Upper lobe of right lung (tissue), 1 donor: ENCODE measurements at regions of chr1 and their contacts with region 1.

Region 1: GRCh38 chr1:10430216-10431069 is at the start of gene CENPS:
- DNase-seq: peak; percentile 96
- ATAC-seq: peak; percentile 95
- H3K4me3 ChIP-seq: peak within 1 kb of the TSS; percentile 92
- H3K27ac ChIP-seq: peak within 1 kb of the TSS; percentile 77
- H3K4me1 ChIP-seq: peaks cover 15% of the 10 kb centered on the region
- H3K27me3 ChIP-seq: no peaks in the 10 kb centered on the region
- CTCF ChIP-seq: peak; percentile 95
- total RNA-seq, gene CENPS: 10.2 TPM

Region 2: DNA sequence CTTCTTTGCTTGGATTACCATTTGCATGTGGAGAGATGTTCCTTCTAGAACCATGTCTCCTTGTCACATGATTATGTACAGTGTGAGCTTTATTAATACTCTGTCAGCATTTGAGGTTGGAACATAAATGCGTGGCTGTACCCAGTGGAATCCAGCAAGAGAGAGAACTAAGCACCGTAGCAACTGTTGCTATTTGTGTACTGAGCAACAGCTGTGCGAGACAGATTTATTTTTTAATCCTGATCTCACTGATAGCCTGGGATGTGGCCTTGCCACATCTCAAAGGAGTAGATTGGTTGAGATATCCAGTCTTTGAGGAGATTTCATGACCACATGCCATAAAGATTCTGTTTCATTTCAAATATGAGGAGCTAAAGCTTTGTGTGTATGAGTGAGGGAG is 176.7 kb before region 1 on chr1:
- intact Hi-C with region 1: no loop called
- DNase-seq: no peak
- ATAC-seq: peak; percentile 93
- H3K4me3 ChIP-seq: no peak overlapping the region
- H3K27ac ChIP-seq: peak overlapping the region; percentile 75
- H3K4me1 ChIP-seq: peaks cover 14% of the 10 kb centered on the region
- H3K27me3 ChIP-seq: no peaks in the 10 kb centered on the region
- CTCF ChIP-seq: no peak

Region 3: GRCh38 chr1:10378081-10378841 is 52.2 kb before region 1 on chr1:
- intact Hi-C with region 1: loop called (anchors 10 kb)
- DNase-seq: peak; percentile 77
- ATAC-seq: peak; percentile 88
- H3K4me3 ChIP-seq: no peak overlapping the region
- H3K27ac ChIP-seq: peak overlapping the region; percentile 53
- H3K4me1 ChIP-seq: peaks cover 7% of the 10 kb centered on the region
- H3K27me3 ChIP-seq: no peaks in the 10 kb centered on the region
- CTCF ChIP-seq: no peak

Region 4: GRCh38 chr1:10494754-10495474 is 64.5 kb after region 1 on chr1:
- intact Hi-C with region 1: loop called (anchors 10 kb)
- DNase-seq: peak; percentile 85
- ATAC-seq: peak; percentile 93
- H3K4me3 ChIP-seq: peak overlapping the region; percentile 28
- H3K27ac ChIP-seq: peak overlapping the region; percentile 14
- H3K4me1 ChIP-seq: peaks cover 12% of the 10 kb centered on the region
- H3K27me3 ChIP-seq: no peaks in the 10 kb centered on the region
- CTCF ChIP-seq: peak; percentile 95